ENCODE measurements at regions of chr17 and their contacts with region 1.

Region 1: GRCh38 chr17:68435876-68436842 is 21.1 kb downstream of the WIPI1 start:
- DNase-seq: peak; percentile 73 to 88
- H3K4me3 ChIP-seq: no peak overlapping the region
- H3K4me1 ChIP-seq: no peaks in the 10 kb centered on the region; the same call in 1 of the 2 replicates
- H3K27me3 ChIP-seq: no peaks in the 10 kb centered on the region

Region 2: DNA sequence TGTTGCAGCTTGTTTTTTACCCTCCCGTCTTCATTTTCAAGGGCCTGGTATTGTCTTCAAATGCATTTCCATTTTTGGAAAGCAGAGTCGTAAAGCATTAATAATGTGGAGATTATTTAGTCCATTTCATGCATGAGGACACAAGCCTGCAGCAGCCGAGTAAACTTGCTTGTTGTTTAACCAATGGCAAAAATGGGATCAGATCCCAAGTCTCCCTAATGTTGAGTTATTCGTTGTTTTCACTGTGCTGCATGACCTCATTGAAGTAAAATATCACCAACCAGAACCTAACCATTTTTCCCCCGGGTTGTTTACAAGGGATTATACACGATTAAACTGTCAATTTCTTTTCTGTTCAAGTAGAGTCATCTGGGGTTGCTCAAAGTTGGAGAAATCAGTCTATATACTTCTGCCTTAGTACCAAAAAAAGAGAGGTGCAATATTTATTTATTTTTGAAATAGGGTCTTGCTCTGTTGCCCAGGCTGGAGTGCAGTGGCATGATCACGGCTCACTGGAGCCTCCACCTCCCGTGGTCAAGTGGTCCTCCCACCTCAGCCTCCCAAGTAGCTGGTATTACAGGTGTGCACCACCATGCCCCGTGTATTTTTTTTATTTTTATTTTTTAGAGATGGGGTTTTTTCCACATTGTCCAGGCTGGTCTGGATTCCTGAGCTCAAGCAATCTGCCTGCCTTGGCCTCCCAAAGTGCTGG is 176.0 kb before region 1 on chr17:
- in situ Hi-C with region 1: loop called (anchors 10 kb)
- DNase-seq: no peak
- H3K4me3 ChIP-seq: no peak overlapping the region
- H3K4me1 ChIP-seq: peaks cover 15% of the 10 kb centered on the region
- H3K27me3 ChIP-seq: no peaks in the 10 kb centered on the region

Measured in HAP-1 (cell line).